A549 (cell line): ENCODE measurements at regions of chr11 and their contacts with region 1.

Region 1: GRCh38 chr11:11946180-11946579 is 62.2 kb downstream of the DKK3 start:
- DNase-seq: no peak
- ATAC-seq: no peak; a peak in 1 of 6 replicates
- H3K4me3 ChIP-seq: no peak overlapping the region
- H3K27ac ChIP-seq: no peak overlapping the region
- H3K4me1 ChIP-seq: peaks cover 40% of the 10 kb centered on the region
- CTCF ChIP-seq: no peak
- EP300 ChIP-seq: no peak
- POLR2A ChIP-seq: no peak
- RAD21 ChIP-seq: no peak

Region 2: DNA sequence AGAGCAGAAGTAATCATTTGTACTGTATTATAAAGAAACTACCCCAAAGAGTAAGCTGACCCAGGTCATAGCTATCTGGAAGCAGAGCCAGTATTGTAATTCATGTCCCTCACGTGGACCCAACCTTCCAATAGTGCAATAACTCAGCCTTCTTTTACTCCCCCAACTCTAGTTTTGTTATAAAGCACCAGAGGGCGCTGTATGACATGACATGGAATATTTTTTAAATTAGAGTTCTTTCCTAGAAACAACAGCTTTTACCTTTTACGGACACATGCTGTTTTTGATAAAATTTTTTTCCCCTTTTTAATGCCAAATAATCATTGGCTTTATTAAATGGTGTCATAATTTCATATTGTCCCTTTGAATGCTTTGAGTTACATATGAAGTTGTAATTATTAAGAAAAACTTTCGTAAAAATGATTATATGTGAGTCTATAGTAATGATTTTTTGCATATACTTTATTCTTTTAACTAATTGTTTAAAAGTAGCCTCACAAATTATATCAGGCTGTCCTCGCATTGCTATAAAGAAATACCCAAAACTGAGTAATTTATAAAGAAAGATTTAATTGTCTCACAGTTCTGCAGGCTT is 14.6 kb before region 1 on chr11:
- CTCF ChIA-PET with region 1: interaction called, 17 read pairs
- POLR2A ChIA-PET with region 1: no interaction called
- DNase-seq: peak; percentile 26 to 64
- ATAC-seq: peak; percentile 73 to 82; a peak in 4 of 6 replicates
- H3K4me3 ChIP-seq: no peak overlapping the region
- H3K27ac ChIP-seq: no peak overlapping the region
- H3K4me1 ChIP-seq: peaks cover 4% of the 10 kb centered on the region; the same call in 2 of the 3 replicates
- CTCF ChIP-seq: peak; percentile 84
- EP300 ChIP-seq: no peak
- POLR2A ChIP-seq: no peak
- RAD21 ChIP-seq: peak; percentile 84 to 85

Region 3: GRCh38 chr11:11987503-11988022 is 41.4 kb after region 1 on chr11:
- CTCF ChIA-PET with region 1: no interaction called
- POLR2A ChIA-PET with region 1: no interaction called
- DNase-seq: peak in 1 of 2 experiments; percentile 66
- ATAC-seq: peak; percentile 9 to 40; a peak in 3 of 6 replicates
- H3K4me3 ChIP-seq: no peak overlapping the region
- H3K27ac ChIP-seq: peak overlapping the region; percentile 80 to 86
- H3K4me1 ChIP-seq: peaks cover 61% of the 10 kb centered on the region
- CTCF ChIP-seq: peak; percentile 23; the same call in 1 of the 3 replicates
- EP300 ChIP-seq: no peak
- POLR2A ChIP-seq: no peak
- RAD21 ChIP-seq: 0 out of 5 replicates have a peak, but pooled peaks of 1 of the 2 experiments have one; percentile 19